HEK293T (cell line): ENCODE measurements at regions of chr13 and their contacts with region 1.

Region 1: GRCh38 chr13:112873851-112874750 is 94.9 kb upstream of the MCF2L start:
- DNase-seq: peak; percentile 64

Region 2: DNA sequence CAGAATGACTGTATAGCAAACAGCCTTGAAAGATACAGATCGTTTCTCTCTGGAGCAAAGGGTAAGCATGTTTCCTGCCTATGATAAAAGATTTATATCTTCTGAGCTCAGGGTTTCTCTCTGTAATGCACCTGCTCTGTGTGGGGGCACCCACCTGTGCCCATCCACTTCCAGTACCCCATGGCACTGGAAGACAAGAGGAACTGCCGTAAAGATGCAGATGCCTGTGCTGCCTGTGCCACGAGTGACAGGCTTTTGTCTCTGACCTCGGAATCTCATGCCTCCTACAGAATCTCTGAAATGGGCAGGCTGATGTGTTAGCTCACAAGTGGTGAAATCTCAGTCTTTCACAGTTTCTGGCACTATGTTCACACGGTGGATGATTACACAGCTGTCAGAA is 234.6 kb before region 1 on chr13:
- CTCF ChIA-PET with region 1: interaction called, 10 read pairs
- POLR2A ChIA-PET with region 1: no interaction called
- DNase-seq: no peak

Region 3: GRCh38 chr13:112885782-112886268 is 11.7 kb after region 1 on chr13:
- CTCF ChIA-PET with region 1: no interaction called
- POLR2A ChIA-PET with region 1: no interaction called
- DNase-seq: no peak

Region 4: GRCh38 chr13:112908342-112908741 is 34.2 kb after region 1 on chr13:
- CTCF ChIA-PET with region 1: no interaction called
- POLR2A ChIA-PET with region 1: no interaction called
- DNase-seq: no peak